GM12878 (cell line): ENCODE measurements at regions of chr5 and their contacts with region 1.

Region 1: GRCh38 chr5:111337688-111338087 is 113.5 kb downstream of the CAMK4 start:
- DNase-seq: peak; percentile 31
- ATAC-seq: peak; percentile 90
- H3K4me3 ChIP-seq: no peak overlapping the region
- H3K27ac ChIP-seq: peak overlapping the region; percentile 22; the same call in 1 of the 2 replicates
- H3K4me1 ChIP-seq: peaks cover 8% of the 10 kb centered on the region
- H3K27me3 ChIP-seq: no peaks in the 10 kb centered on the region
- CTCF ChIP-seq: no peak
- EP300 ChIP-seq: peak; percentile 25 to 61; a peak in 3 of 4 replicates
- POLR2A ChIP-seq: no peak
- RAD21 ChIP-seq: no peak

Region 2: DNA sequence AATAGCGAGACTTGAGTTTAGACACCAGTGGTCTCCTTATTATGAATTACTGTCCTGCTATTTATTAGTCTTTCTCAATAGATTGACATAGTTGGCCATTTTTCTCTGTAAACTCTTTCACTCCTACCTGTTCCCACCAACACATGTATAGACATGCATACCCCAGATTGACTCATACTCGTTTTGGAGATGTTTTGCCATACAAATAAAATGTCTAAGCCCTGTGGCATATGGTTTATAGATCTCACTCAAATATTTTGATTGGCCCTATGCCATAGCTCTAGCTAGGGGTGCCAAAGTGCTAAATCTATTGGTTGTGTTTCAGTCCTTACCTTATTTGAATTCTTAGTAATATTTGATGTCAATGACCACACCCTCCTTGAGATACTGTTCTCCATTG is 71.2 kb before region 1 on chr5:
- CTCF ChIA-PET with region 1: no interaction called
- POLR2A ChIA-PET with region 1: interaction called, 10 read pairs
- RAD21 ChIA-PET with region 1: no interaction called
- SMC1A ChIA-PET with region 1: no interaction called
- in situ Hi-C with region 1: no loop called
- intact Hi-C with region 1: no loop called
- DNase-seq: no peak
- ATAC-seq: no peak
- H3K4me3 ChIP-seq: no peak overlapping the region
- H3K27ac ChIP-seq: no peak overlapping the region
- H3K4me1 ChIP-seq: 0 out of 2 replicates have a peak, but pooled peaks cover 3% of the 10 kb centered on the region
- H3K27me3 ChIP-seq: no peaks in the 10 kb centered on the region
- CTCF ChIP-seq: no peak
- EP300 ChIP-seq: no peak
- POLR2A ChIP-seq: no peak
- RAD21 ChIP-seq: no peak

Region 3: DNA sequence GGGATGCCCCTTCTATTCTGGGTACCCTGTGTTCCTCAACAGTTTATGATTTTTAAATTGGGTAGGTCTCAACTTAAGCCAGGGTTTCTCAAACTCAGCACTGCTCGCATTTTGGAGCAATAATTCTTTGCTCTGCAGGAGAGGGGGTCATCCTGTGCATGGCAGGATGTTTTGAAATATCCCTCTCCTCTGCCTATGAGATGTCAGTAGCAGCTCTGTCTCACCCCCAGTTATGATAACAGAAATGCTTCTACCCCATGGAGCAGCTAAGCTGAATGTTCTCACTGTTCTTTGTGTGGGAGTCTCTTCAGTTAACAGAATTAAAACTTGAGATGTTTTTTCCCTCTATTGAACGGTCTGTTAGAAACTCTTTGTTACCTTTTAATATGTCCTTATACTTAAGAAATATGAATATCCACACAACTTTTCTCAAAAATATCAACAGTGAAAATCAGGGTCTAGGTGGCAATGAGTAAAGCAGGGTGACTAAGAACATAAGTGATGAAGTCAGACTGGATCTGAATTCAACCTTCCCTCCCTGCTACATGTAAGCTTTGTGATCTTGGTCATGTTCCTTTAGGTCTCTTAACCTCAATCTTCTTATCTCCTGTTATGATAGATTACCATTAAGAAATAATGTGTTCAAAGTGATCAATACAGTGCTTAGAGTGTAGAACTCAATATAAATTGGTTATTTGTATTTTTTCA is 24.5 kb before region 1 on chr5:
- CTCF ChIA-PET with region 1: interaction called, 4 read pairs
- POLR2A ChIA-PET with region 1: no interaction called
- RAD21 ChIA-PET with region 1: interaction called, 3 read pairs
- SMC1A ChIA-PET with region 1: interaction called, 10 read pairs
- in situ Hi-C with region 1: no loop called
- intact Hi-C with region 1: no loop called
- DNase-seq: no peak
- ATAC-seq: peak; percentile 79
- H3K4me3 ChIP-seq: no peak overlapping the region
- H3K27ac ChIP-seq: no peak overlapping the region
- H3K4me1 ChIP-seq: no peaks in the 10 kb centered on the region; the same call in 1 of the 2 replicates
- H3K27me3 ChIP-seq: no peaks in the 10 kb centered on the region
- CTCF ChIP-seq: no peak
- EP300 ChIP-seq: no peak
- POLR2A ChIP-seq: no peak
- RAD21 ChIP-seq: no peak